K562 (cell line): ENCODE measurements at regions of chr10 and their contacts with region 1.

Region 1: DNA sequence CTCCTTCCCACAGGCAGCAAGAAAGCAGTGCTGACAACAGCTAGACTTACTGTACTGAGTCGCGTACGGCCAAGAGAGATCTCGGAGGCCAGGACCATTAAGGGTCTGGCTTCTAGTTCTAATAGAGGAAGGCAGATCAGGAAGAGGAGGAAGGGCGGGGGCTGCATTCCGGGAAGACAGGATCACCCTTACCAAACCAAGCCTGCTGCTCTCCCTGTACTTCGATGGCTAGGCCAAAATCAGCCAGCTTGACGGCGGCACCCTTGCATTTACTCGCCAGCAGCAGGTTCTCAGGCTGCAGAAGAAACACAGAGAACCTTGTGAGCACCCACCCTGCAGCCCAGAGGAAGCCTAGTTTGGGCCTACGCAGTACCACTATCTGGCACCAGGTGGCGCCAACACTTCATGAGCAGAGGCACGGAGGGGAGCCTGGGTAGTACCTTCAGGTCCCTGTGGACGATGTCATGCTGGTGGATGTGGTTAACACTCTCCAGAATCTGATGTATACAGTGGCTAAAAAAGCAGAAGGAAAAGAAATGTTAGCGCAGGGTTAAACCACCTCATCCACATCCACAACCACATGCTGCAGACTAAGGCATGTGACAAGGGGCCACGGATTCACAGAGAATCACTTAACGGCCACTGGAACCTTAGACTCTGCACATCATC is 25.4 kb downstream of the CAMK2G start:
- DNase-seq: peak; percentile 90 to 95 (median 92)
- ATAC-seq: peak; percentile 98
- H3K4me3 ChIP-seq: no peak overlapping the region
- H3K27ac ChIP-seq: no peak overlapping the region
- H3K4me1 ChIP-seq: peaks cover 0 to 11% of the 10 kb centered on the region in 2 experiments; a peak in 2 of 5 replicates
- H3K27me3 ChIP-seq: no peaks in the 10 kb centered on the region
- CTCF ChIP-seq: peak; percentile 97 to 99 (median 99)
- EP300 ChIP-seq: no peak
- POLR2A ChIP-seq: no peak
- RAD21 ChIP-seq: peak; percentile 99

Region 2: GRCh38 chr10:73940634-73941221 is 91.8 kb after region 1 on chr10:
- CTCF ChIA-PET with region 1: interaction called, 17 read pairs
- POLR2A ChIA-PET with region 1: interaction called, 4 read pairs
- in situ Hi-C with region 1: loop called (anchors 5 kb)
- intact Hi-C with region 1: loop called (anchors 1 kb)
- DNase-seq: peak; percentile 93 to 97 (median 96)
- ATAC-seq: peak; percentile 99
- H3K4me3 ChIP-seq: peak overlapping the region; percentile 2; the same call in 1 of the 2 replicates
- H3K27ac ChIP-seq: peak overlapping the region; percentile 51
- H3K4me1 ChIP-seq: peaks cover 18% of the 10 kb centered on the region in 2 experiments; a peak in 4 of 5 replicates
- H3K27me3 ChIP-seq: no peaks in the 10 kb centered on the region
- CTCF ChIP-seq: peak; percentile 96 to 99 (median 97)
- EP300 ChIP-seq: 0 out of 2 replicates have a peak, but pooled peaks have one; percentile 12
- POLR2A ChIP-seq: peak; percentile 41; the same call in 1 of the 2 replicates
- RAD21 ChIP-seq: peak; percentile 99 to 100

Region 3: GRCh38 chr10:74081192-74081803 is 232.3 kb after region 1 on chr10:
- CTCF ChIA-PET with region 1: interaction called, 20 read pairs
- POLR2A ChIA-PET with region 1: no interaction called
- in situ Hi-C with region 1: no loop called
- intact Hi-C with region 1: no loop called
- DNase-seq: peak; percentile 55 to 80 (median 68)
- ATAC-seq: peak; percentile 92
- H3K4me3 ChIP-seq: no peak overlapping the region
- H3K27ac ChIP-seq: no peak overlapping the region
- H3K4me1 ChIP-seq: peaks cover 0 to 15% of the 10 kb centered on the region in 2 experiments; a peak in 1 of 5 replicates
- H3K27me3 ChIP-seq: no peaks in the 10 kb centered on the region
- CTCF ChIP-seq: peak; percentile 79 to 85 (median 82)
- EP300 ChIP-seq: no peak
- POLR2A ChIP-seq: no peak
- RAD21 ChIP-seq: peak; percentile 84 to 86

Region 4: DNA sequence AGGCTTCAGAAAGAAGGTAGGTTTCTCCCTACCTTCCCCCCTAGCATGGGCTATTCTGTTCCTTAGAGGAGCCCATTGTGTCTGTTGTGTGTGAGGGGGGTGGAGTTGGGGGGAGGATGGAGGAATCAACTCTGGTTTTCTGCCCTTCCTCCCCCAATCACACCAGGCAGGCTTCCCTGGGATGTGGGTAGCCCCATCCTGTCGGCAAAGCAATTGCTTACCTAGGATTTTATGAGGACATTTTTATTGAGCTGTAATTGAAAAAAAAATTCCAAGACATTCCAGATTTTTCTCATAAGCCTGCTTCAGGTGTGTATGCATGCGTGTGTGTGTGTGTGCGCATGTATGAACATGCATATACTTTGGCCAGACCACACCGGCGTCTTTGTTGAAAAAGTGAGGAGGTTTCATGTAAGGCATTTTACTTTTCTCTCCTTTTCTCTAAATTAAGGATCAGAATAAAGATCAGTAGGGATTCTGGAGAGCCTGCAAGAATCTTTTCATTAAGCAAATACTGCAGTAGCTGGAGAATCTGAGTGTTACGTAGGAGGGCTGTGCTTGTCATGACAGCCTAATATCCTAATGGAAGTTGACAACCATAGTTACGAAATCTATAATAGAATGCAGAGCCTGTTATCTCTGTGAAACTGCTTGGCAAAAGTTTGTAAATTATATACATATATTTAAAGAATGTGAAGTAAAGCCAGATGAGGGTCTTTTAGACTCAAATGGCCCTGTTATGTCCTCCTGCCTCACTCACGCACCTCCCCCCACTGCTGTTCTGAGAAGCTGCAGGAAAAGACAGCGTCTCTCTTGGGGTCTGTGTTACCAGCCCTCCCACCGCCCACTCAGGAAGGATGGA is 1235.2 kb after region 1 on chr10:
- CTCF ChIA-PET with region 1: no interaction called
- POLR2A ChIA-PET with region 1: no interaction called
- in situ Hi-C with region 1: loop called (anchors 10 kb)
- intact Hi-C with region 1: no loop called
- DNase-seq: no peak
- ATAC-seq: no peak
- H3K4me3 ChIP-seq: no peak overlapping the region
- H3K27ac ChIP-seq: no peak overlapping the region
- H3K4me1 ChIP-seq: peaks cover 13 to 14% of the 10 kb centered on the region in 2 experiments; a peak in 4 of 5 replicates
- H3K27me3 ChIP-seq: no peaks in the 10 kb centered on the region; a peak in 1 of 5 replicates
- CTCF ChIP-seq: no peak
- EP300 ChIP-seq: no peak
- POLR2A ChIP-seq: no peak
- RAD21 ChIP-seq: no peak

Region 5: DNA sequence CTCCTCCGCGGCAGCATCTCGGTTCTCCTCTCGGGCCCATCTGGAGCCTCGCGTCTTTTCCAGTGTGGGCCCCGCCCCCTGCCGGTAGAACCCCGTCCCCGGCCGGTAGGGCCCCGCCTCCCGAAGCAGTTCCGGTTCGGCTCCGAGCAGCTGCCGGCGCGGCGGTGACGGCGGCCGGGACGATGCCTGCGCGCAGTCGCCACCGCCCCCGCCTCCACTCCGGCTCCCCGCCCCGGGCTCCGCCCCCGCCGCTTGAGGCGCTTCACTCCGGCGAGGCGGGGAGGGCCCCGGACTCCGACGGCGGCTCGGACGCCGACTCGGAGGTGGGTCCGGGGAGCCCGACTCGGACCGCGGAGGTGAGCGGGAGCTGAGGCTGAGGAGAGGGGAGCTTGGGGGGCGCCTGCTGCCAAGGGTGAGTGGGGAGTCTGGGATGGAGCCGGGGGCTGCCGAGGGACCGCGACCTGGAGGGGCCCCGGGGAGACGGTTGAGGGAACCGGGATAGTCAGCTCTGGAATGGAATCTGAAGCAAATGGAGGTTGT is 1262.5 kb after region 1 on chr10 and contains the start of gene SAMD8:
- CTCF ChIA-PET with region 1: no interaction called
- POLR2A ChIA-PET with region 1: no interaction called
- in situ Hi-C with region 1: no loop called
- intact Hi-C with region 1: no loop called
- DNase-seq: peak; percentile 98
- ATAC-seq: peak; percentile 82
- H3K4me3 ChIP-seq: peak within 1 kb of the TSS; percentile 89
- H3K27ac ChIP-seq: peak within 1 kb of the TSS; percentile 85
- H3K4me1 ChIP-seq: peaks cover 51 to 55% of the 10 kb centered on the region in 2 experiments
- H3K27me3 ChIP-seq: no peaks in the 10 kb centered on the region
- CTCF ChIP-seq: peak in 2 of 3 experiments; percentile 18 to 23; a peak in 2 of 6 replicates
- EP300 ChIP-seq: no peak
- POLR2A ChIP-seq: peak; percentile 81
- RAD21 ChIP-seq: no peak
- polyA plus RNA-seq, gene SAMD8: 2.7 to 2.8 TPM